Activated CD8-positive, alpha-beta T cell treated with anti-CD3 and anti-CD28 coated beads, Interleukin-2, amount 10 ng/mL, durations not matched to agents 7 days and 5 days (primary cell): ENCODE measurements at regions of chr9 and their contacts with region 1.

Region 1: DNA sequence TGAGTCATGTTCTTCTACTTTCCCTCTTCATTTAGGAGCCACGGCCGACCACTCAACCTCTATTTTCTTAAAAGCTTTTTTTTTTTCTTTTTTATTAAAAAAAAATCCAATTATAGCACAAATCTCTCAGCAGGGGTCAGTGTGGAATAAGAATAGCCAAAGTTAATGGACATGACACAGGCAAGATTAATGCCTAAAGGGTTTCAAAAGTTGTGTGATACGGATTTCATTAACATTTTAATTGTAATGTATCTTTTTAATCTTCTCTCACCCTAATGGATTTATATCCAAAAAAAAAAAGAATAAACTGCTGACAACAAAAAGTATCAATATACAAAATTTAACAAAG is 5.4 kb downstream of the NACC2 start:
- DNase-seq: no peak
- ATAC-seq: no peak
- H3K4me3 Mint-ChIP-seq: no peak overlapping the region
- H3K27ac Mint-ChIP-seq: no peak overlapping the region
- H3K4me1 Mint-ChIP-seq: peaks cover 11% of the 10 kb centered on the region
- H3K27me3 Mint-ChIP-seq: no peaks in the 10 kb centered on the region

Region 2: GRCh38 chr9:135969064-135969683 is 120.5 kb before region 1 on chr9:
- CTCF ChIA-PET with region 1: interaction called, 21 read pairs
- POLR2A ChIA-PET with region 1: no interaction called
- DNase-seq: no peak
- ATAC-seq: no peak
- H3K4me3 Mint-ChIP-seq: no peak overlapping the region
- H3K27ac Mint-ChIP-seq: no peak overlapping the region
- H3K4me1 Mint-ChIP-seq: peaks cover 17% of the 10 kb centered on the region
- H3K27me3 Mint-ChIP-seq: no peaks in the 10 kb centered on the region

Region 3: GRCh38 chr9:136045971-136046920 is 43.4 kb before region 1 on chr9:
- CTCF ChIA-PET with region 1: no interaction called
- POLR2A ChIA-PET with region 1: no interaction called
- DNase-seq: no peak
- ATAC-seq: no peak
- H3K4me3 Mint-ChIP-seq: no peak overlapping the region
- H3K27ac Mint-ChIP-seq: no peak overlapping the region
- H3K4me1 Mint-ChIP-seq: no peaks in the 10 kb centered on the region
- H3K27me3 Mint-ChIP-seq: peaks cover 2% of the 10 kb centered on the region

Region 4: DNA sequence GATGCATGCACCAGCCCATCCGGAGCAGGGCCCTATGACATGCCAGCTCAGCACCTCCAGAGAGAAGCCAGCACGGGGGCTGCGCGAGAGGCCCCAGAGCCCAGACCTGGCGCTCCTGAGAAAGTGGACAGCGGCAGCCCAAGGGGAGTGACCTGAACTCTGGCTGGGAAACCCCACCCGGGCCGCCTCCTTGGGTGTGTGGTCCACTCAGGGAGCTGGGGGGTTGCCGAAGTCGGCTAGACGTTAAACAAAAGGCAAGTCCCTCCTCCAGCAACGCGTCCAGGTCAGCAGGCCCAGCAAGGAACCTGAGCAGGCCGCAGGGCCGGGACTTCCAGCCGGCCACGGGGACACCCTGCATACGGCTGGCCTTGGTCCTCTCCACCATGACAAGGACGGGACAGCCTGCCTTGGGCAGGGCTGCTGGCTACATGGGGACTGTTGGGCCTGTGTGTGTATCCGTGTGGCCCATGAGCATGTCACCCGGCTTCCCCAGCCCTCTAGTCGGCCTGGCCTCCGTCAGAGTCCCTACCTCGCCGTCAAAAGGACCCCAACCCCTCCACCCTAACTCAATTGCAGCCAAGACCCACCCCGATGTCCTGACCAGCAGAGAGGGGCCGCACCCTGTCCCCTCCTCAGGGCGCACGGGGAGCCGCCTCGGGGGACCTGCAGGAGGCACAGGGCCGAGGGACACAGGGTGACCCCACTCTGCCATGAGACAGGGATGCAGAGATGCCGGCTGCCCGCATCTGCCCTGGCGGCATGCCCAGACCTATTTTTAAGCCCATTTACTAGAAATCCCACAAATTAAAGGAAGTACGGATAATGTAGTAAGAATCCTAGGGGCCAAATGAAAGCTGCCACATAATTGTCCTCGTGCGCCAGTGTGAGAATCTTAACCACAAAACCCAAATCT is 30.1 kb before region 1 on chr9:
- CTCF ChIA-PET with region 1: no interaction called
- POLR2A ChIA-PET with region 1: no interaction called
- DNase-seq: no peak
- ATAC-seq: no peak
- H3K4me3 Mint-ChIP-seq: no peak overlapping the region
- H3K27ac Mint-ChIP-seq: no peak overlapping the region
- H3K4me1 Mint-ChIP-seq: peaks cover 4% of the 10 kb centered on the region
- H3K27me3 Mint-ChIP-seq: no peaks in the 10 kb centered on the region

Region 5: GRCh38 chr9:136079211-136079915 is 10.3 kb before region 1 on chr9:
- CTCF ChIA-PET with region 1: no interaction called
- POLR2A ChIA-PET with region 1: no interaction called
- DNase-seq: no peak
- ATAC-seq: no peak
- H3K4me3 Mint-ChIP-seq: no peak overlapping the region
- H3K27ac Mint-ChIP-seq: no peak overlapping the region
- H3K4me1 Mint-ChIP-seq: peaks cover 13% of the 10 kb centered on the region
- H3K27me3 Mint-ChIP-seq: peaks cover 7% of the 10 kb centered on the region

Region 6: GRCh38 chr9:136118320-136119060 is 28.8 kb after region 1 on chr9 and contains the start of gene TMEM250:
- CTCF ChIA-PET with region 1: interaction called, 30 read pairs
- POLR2A ChIA-PET with region 1: no interaction called
- DNase-seq: peak; percentile 97
- ATAC-seq: peak; percentile 91
- H3K4me3 Mint-ChIP-seq: peak within 1 kb of the TSS; percentile 81
- H3K27ac Mint-ChIP-seq: peak within 1 kb of the TSS; percentile 81
- H3K4me1 Mint-ChIP-seq: peaks cover 30% of the 10 kb centered on the region
- H3K27me3 Mint-ChIP-seq: no peaks in the 10 kb centered on the region
- total RNA-seq, gene TMEM250: 56.5 to 57.0 TPM